ENCODE measurements at regions of chr1 and their contacts with region 1.

Region 1: GRCh38 chr1:27979151-27979858 is 19.5 kb downstream of the XKR8 start:
- DNase-seq: no peak
- H3K4me3 Mint-ChIP-seq: no peak overlapping the region
- H3K27ac Mint-ChIP-seq: no peak overlapping the region
- H3K4me1 Mint-ChIP-seq: no peaks in the 10 kb centered on the region
- H3K27me3 Mint-ChIP-seq: no peaks in the 10 kb centered on the region

Region 2: GRCh38 chr1:27940297-27940696 is 39.0 kb before region 1 on chr1:
- CTCF ChIA-PET with region 1: interaction called, 28 read pairs
- POLR2A ChIA-PET with region 1: no interaction called
- intact Hi-C with region 1: loop called (anchors 1 kb)
- DNase-seq: peak; percentile 84
- H3K4me3 Mint-ChIP-seq: no peak overlapping the region
- H3K27ac Mint-ChIP-seq: peak overlapping the region; percentile 54
- H3K4me1 Mint-ChIP-seq: peaks cover 25% of the 10 kb centered on the region
- H3K27me3 Mint-ChIP-seq: peaks cover 7% of the 10 kb centered on the region